ENCODE measurements at regions of chr3 and their contacts with region 1.

Region 1: DNA sequence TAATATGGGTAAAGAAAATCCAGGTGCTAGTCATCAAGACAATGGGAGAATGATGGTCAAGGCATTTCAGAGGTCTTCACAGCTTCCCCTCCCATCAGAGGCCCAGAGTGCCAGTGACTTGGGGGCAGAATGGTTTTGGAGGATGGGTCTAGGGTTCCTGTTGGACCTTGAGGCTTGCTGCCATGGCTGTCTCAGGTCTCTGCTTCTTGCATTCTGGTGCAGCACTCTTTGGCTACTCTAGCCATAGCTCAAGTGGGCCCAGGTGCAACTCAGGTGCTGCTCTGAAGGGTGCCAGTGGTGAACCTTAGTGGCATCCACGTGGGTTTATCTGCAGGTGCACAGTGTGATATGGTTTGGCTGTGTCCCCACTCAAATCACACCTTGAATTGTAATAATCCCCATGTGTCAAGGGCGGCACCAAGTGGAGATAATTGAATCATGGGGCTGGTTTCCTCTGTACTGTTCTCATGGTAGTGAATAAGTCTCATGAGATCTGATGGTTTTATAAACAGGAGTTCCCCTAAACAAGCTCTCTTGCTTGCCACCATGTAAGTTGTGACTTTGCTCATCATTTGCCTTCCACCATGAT is 48.5 kb upstream of the PEX5L start:
- DNase-seq: no peak
- ATAC-seq: no peak
- H3K4me3 ChIP-seq: no peak overlapping the region
- H3K27ac ChIP-seq: no peak overlapping the region
- H3K4me1 ChIP-seq: no peaks in the 10 kb centered on the region
- H3K27me3 ChIP-seq: no peaks in the 10 kb centered on the region
- CTCF ChIP-seq: peak; percentile 22; the same call in 1 of the 2 replicates

Region 2: GRCh38 chr3:180004542-180004941 is 80.7 kb before region 1 on chr3:
- CTCF ChIA-PET with region 1: no interaction called
- POLR2A ChIA-PET with region 1: no interaction called
- in situ Hi-C with region 1: no loop called
- intact Hi-C with region 1: no loop called
- DNase-seq: no peak
- ATAC-seq: no peak
- H3K4me3 ChIP-seq: no peak overlapping the region
- H3K27ac ChIP-seq: no peak overlapping the region
- H3K4me1 ChIP-seq: no peaks in the 10 kb centered on the region
- H3K27me3 ChIP-seq: no peaks in the 10 kb centered on the region
- CTCF ChIP-seq: no peak

Region 3: GRCh38 chr3:180048103-180048502 is 37.1 kb before region 1 on chr3:
- CTCF ChIA-PET with region 1: interaction called, 3 read pairs
- POLR2A ChIA-PET with region 1: interaction called, 10 read pairs
- in situ Hi-C with region 1: no loop called
- intact Hi-C with region 1: no loop called
- DNase-seq: no peak
- ATAC-seq: no peak
- H3K4me3 ChIP-seq: no peak overlapping the region
- H3K27ac ChIP-seq: no peak overlapping the region
- H3K4me1 ChIP-seq: no peaks in the 10 kb centered on the region
- H3K27me3 ChIP-seq: no peaks in the 10 kb centered on the region
- CTCF ChIP-seq: no peak

Region 4: DNA sequence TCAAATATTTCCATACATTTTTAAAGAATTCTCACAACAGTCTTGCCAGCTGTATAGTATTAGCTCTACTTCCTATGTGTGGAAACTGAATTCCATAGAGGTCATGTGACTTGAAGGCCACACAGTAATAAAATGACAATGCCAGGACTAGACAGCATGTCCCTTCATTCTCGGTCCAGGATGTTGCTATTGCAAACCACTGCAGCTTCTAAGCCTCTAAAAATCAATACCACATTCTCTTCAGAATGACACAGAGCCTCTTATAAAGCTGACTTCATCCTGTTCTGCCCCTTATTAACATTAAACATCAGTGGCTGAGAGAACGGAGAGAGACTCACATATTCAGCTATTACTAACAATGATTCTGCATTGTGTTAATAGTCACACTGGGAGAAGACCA is 191.8 kb after region 1 on chr3:
- CTCF ChIA-PET with region 1: interaction called, 10 read pairs
- POLR2A ChIA-PET with region 1: no interaction called
- in situ Hi-C with region 1: no loop called
- intact Hi-C with region 1: no loop called
- DNase-seq: peak; percentile 8
- ATAC-seq: 0 out of 2 replicates have a peak, but pooled peaks have one; percentile 27
- H3K4me3 ChIP-seq: no peak overlapping the region
- H3K27ac ChIP-seq: no peak overlapping the region
- H3K4me1 ChIP-seq: no peaks in the 10 kb centered on the region
- H3K27me3 ChIP-seq: no peaks in the 10 kb centered on the region
- CTCF ChIP-seq: no peak